OCI-LY7 (cell line): ENCODE measurements at regions of chr12 and their contacts with region 1.

Region 1: DNA sequence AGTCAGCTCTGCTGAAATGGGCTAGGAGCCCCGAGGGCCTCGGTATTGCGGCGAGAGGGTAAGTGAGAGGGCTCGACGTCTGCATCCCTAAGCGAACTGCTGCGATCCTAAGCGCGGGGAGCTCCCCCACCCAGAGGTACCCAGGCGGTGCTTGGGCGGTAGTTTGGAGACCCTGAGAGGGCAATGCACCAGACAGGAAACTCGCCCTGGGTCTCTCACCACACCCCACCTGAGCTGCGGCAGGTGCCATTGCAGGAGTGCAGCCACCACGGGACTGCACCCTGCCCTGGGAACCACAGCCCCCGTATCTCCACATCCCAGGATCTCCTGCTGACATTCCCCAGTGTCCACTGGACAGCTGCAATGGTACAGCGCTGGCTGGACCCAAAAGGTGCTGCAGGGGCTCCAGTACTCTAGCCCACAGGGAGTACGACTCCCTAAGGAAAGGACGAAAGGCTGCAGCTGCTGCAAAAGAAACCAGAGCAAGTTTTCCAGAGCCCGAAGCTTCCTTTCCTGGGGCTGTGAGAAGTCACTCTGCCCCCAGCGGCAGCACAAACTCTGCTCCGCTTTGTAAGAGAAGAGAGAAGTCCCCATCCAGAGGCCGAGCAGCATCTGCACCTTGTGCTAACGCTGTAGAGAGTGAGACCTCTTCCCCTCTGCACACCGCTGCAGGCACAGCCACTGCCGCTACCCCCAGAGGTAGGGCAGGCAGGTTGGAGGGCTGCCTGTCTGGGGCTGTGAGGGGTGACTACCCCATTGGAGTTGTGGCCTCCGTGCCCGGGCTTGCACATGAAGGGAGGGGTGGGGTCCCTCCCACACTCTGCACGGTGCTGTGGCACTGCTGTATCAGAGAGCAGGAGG is 31.1 kb upstream of the MON2 start:
- DNase-seq: peak; percentile 41
- H3K4me3 ChIP-seq: peak overlapping the region; percentile 37
- H3K27ac ChIP-seq: no peak overlapping the region
- H3K4me1 ChIP-seq: peaks cover 6% of the 10 kb centered on the region
- CTCF ChIP-seq: peak; percentile 52

Region 2: GRCh38 chr12:62414180-62414579 is 21.4 kb before region 1 on chr12:
- CTCF ChIA-PET with region 1: no interaction called
- POLR2A ChIA-PET with region 1: no interaction called
- intact Hi-C with region 1: no loop called
- DNase-seq: no peak
- H3K4me3 ChIP-seq: no peak overlapping the region
- H3K27ac ChIP-seq: no peak overlapping the region
- H3K4me1 ChIP-seq: no peaks in the 10 kb centered on the region
- CTCF ChIP-seq: no peak

Region 3: DNA sequence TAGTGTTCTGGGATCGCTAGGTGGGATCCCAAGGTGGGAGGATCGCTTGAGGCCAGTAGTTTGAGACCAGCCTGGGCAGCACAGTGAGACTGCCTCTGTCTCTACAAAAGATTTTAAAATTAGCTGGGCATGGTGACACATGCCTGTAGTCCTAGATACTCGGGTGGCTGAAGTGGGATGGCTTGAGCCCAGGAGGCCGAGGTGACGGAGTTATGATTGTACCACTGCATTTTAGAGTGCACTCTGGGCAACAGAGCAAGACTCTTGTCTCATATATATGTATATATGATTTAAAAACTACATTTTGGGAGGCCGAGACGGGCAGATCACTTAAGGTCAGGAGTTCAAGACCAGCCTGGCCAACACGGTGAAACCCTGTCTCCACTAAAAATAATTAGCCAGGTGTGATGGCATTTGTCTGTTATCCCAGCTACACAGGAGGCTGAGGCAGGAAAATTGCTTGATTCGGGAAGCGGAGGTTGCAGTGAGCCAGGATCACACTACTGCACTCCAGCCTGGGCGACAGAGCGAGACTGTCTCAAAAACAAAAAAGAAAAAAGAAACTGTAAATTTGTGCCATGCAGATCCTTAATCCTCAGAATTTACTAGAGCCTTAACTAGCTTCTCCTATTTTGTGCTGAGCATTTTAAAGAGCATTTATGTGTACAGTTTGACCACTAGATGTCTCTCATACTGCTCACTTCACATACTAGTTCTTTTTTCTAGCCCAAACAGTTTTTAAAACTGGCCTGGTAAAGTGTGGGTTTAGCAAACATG is 145.9 kb after region 1 on chr12:
- CTCF ChIA-PET with region 1: no interaction called
- POLR2A ChIA-PET with region 1: no interaction called
- intact Hi-C with region 1: loop called (anchors 5 kb)
- DNase-seq: peak; percentile 52
- H3K4me3 ChIP-seq: no peak overlapping the region
- H3K27ac ChIP-seq: no peak overlapping the region
- H3K4me1 ChIP-seq: no peaks in the 10 kb centered on the region
- CTCF ChIP-seq: peak; percentile 84

Region 4: GRCh38 chr12:62793256-62794217 is 358.0 kb after region 1 on chr12:
- CTCF ChIA-PET with region 1: no interaction called
- POLR2A ChIA-PET with region 1: no interaction called
- intact Hi-C with region 1: loop called (anchors 1 kb)
- DNase-seq: peak; percentile 64
- H3K4me3 ChIP-seq: no peak overlapping the region
- H3K27ac ChIP-seq: no peak overlapping the region
- H3K4me1 ChIP-seq: no peaks in the 10 kb centered on the region
- CTCF ChIP-seq: peak; percentile 95